ENCODE measurements at regions of chr20 and their contacts with region 1.

Region 1: DNA sequence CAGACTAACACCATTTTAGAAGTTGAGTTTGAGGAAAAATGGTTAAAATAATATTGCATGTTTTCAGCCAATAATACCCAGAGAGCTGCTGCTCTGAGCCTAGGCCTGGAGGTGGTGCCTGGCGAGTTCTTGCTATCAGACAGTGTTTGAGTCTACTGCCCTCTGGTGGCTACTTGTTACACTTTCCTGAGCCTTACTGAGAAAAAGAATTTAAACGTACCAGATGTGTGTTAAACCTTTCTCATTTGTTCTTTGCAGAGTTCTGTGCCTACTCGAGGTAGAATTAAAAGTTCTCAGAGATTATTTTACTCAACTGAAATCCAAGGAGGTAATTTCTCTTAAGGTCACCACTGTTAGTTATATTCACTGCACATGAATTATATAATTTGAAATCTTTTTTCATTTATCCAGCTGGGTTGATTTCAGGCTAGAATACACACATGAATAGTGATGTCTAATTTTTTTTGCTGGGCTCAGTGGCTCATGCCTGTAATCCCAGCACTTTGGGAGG is 38.2 kb downstream of the SHLD1 start:
- DNase-seq: peak; percentile 66
- ATAC-seq: peak; percentile 100
- H3K4me3 ChIP-seq: no peak overlapping the region
- H3K27ac ChIP-seq: no peak overlapping the region
- H3K4me1 ChIP-seq: no peaks in the 10 kb centered on the region
- H3K27me3 ChIP-seq: no peaks in the 10 kb centered on the region
- CTCF ChIP-seq: peak; percentile 76 to 93 (median 87); a peak in 5 of 6 replicates
- EP300 ChIP-seq: no peak
- POLR2A ChIP-seq: no peak
- RAD21 ChIP-seq: peak; percentile 98

Region 2: GRCh38 chr20:5402903-5403531 is 385.4 kb before region 1 on chr20:
- CTCF ChIA-PET with region 1: no interaction called
- POLR2A ChIA-PET with region 1: no interaction called
- RAD21 ChIA-PET with region 1: no interaction called
- SMC1A ChIA-PET with region 1: no interaction called
- in situ Hi-C with region 1: no loop called
- intact Hi-C with region 1: no loop called
- DNase-seq: no peak
- ATAC-seq: peak; percentile 96
- H3K4me3 ChIP-seq: no peak overlapping the region
- H3K27ac ChIP-seq: no peak overlapping the region
- H3K4me1 ChIP-seq: no peaks in the 10 kb centered on the region
- H3K27me3 ChIP-seq: no peaks in the 10 kb centered on the region
- CTCF ChIP-seq: peak; percentile 65 to 85 (median 66)
- EP300 ChIP-seq: no peak
- POLR2A ChIP-seq: no peak
- RAD21 ChIP-seq: peak; percentile 52

Region 3: GRCh38 chr20:5535125-5535771 is 253.2 kb before region 1 on chr20:
- CTCF ChIA-PET with region 1: interaction called, 180 read pairs
- POLR2A ChIA-PET with region 1: interaction called, 5 read pairs
- RAD21 ChIA-PET with region 1: interaction called, 97 read pairs
- SMC1A ChIA-PET with region 1: interaction called, 57 read pairs
- in situ Hi-C with region 1: no loop called
- intact Hi-C with region 1: no loop called
- DNase-seq: no peak
- ATAC-seq: no peak
- H3K4me3 ChIP-seq: no peak overlapping the region
- H3K27ac ChIP-seq: no peak overlapping the region
- H3K4me1 ChIP-seq: no peaks in the 10 kb centered on the region
- H3K27me3 ChIP-seq: no peaks in the 10 kb centered on the region
- CTCF ChIP-seq: no peak
- EP300 ChIP-seq: no peak
- POLR2A ChIP-seq: no peak
- RAD21 ChIP-seq: no peak

Region 4: DNA sequence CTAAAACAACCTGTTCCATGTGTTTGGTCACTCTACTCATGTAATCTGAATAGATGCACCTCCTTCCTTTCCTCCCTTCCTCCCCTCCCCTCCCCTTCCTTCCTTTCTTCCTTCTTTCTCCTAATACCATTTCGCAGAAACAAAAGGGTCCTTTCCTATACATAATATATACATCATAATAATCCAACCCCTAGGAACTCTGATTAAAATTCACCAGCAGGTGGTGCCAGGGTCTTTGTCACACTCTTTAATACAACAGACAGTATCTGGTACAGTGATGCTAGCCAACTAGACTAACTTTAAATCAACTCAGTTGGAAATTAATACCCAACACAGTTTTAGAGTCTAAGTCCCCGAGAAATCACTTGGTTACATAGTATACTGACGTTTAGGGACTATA is 219.4 kb before region 1 on chr20:
- CTCF ChIA-PET with region 1: interaction called, 79 read pairs
- POLR2A ChIA-PET with region 1: interaction called, 10 read pairs
- RAD21 ChIA-PET with region 1: interaction called, 74 read pairs
- SMC1A ChIA-PET with region 1: interaction called, 85 read pairs
- in situ Hi-C with region 1: loop called (anchors 5 kb)
- intact Hi-C with region 1: loop called (anchors 1 kb)
- DNase-seq: no peak
- ATAC-seq: peak; percentile 85
- H3K4me3 ChIP-seq: no peak overlapping the region
- H3K27ac ChIP-seq: no peak overlapping the region
- H3K4me1 ChIP-seq: no peaks in the 10 kb centered on the region
- H3K27me3 ChIP-seq: no peaks in the 10 kb centered on the region
- CTCF ChIP-seq: peak; percentile 34 to 62 (median 38); a peak in 5 of 6 replicates
- EP300 ChIP-seq: no peak
- POLR2A ChIP-seq: no peak
- RAD21 ChIP-seq: peak; percentile 78

Region 5: DNA sequence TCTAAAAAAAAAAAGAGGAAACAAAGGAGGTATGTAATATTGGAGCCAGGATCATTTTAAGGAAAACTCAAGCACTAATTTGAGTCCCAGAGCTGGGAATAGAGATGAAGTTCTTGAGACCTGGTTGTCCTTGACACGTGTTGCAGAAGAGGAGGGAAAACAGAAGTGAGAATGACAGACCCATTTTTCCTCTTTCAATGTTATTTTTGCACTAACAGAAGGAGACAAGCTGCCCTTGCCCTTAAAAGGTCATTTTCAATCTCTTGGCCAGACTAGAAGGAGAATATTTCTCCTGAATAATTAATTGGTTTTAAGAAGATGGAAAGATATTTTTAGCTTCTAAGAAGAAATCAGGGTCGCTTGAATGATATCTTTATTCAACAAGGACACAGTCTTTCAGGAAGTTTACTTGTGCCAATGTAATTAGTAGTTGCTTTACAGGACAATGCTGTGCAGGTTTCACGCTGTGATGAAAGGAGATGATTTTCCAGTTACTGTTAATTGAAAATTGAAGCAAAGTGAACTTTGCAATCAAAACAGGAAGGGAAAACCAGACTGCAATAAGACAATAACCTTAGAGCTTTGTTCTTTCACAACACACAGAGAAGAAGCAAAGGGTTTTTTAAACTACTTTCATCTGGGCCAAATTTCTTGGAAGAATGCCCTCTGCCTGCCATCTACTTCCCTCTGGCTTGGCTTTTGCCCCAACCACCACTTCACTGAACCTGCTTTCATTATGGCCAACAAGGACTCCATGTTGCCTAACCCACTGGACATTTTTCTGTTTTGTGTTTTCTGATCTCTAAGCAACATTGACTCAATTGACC is 146.1 kb before region 1 on chr20:
- CTCF ChIA-PET with region 1: interaction called, 30 read pairs
- POLR2A ChIA-PET with region 1: interaction called, 7 read pairs
- RAD21 ChIA-PET with region 1: interaction called, 34 read pairs
- SMC1A ChIA-PET with region 1: interaction called, 19 read pairs
- in situ Hi-C with region 1: no loop called
- intact Hi-C with region 1: no loop called
- DNase-seq: no peak
- ATAC-seq: no peak
- H3K4me3 ChIP-seq: no peak overlapping the region
- H3K27ac ChIP-seq: peak overlapping the region; percentile 75
- H3K4me1 ChIP-seq: peaks cover 48% of the 10 kb centered on the region
- H3K27me3 ChIP-seq: no peaks in the 10 kb centered on the region
- CTCF ChIP-seq: no peak
- EP300 ChIP-seq: no peak
- POLR2A ChIP-seq: no peak
- RAD21 ChIP-seq: no peak

Region 6: DNA sequence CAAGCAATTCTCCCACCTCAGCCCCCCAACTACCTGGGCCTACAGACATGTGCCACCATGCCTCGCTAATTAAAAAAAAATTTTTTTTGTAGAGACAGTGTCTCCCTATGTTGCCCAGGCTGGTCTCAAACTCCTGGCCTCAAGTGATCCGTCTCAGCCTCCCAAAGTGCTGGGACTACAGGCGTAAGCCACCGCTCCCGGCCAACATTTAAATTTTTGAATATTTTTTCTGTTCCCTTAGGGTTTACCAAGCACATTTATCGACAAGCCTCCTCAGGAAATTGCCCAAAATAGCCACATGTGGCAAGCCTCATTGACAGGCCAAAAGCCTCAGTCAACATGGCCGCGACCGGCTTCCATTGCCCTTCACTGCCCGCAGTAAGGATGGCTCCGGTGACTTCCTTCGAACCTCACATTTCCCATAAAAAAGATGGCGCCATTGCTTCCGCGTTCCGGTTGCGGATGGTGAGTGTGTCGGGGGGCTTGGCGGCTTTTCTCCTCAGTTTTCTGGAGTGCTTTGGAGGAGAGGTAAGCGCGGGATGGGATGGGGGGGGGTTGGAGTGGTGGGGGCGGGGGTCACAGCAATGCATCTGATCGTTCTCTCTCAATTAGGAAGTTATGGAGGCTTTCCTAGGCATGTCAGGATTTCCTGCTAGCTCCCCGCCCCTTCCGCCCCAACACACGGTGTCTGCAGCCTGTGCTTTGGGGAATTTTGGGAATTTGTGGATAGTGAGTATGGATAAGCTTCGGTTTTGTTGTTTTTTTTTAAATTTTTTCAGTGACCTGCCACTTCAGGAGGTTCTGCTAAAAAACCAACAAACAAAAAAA is 38.3 kb before region 1 on chr20 and contains the start of gene SHLD1:
- CTCF ChIA-PET with region 1: interaction called, 15 read pairs
- POLR2A ChIA-PET with region 1: no interaction called
- RAD21 ChIA-PET with region 1: interaction called, 5 read pairs
- SMC1A ChIA-PET with region 1: interaction called, 15 read pairs
- in situ Hi-C with region 1: no loop called
- intact Hi-C with region 1: no loop called
- DNase-seq: peak; percentile 61
- ATAC-seq: peak; percentile 98
- H3K4me3 ChIP-seq: peak within 1 kb of the TSS; percentile 91
- H3K27ac ChIP-seq: peak within 1 kb of the TSS; percentile 59
- H3K4me1 ChIP-seq: peaks cover 3% of the 10 kb centered on the region; the same call in 1 of the 2 replicates
- H3K27me3 ChIP-seq: no peaks in the 10 kb centered on the region
- CTCF ChIP-seq: no peak
- EP300 ChIP-seq: no peak
- POLR2A ChIP-seq: peak; percentile 83
- RAD21 ChIP-seq: no peak
- polyA plus RNA-seq, gene SHLD1: 47.1 to 70.9 TPM

Region 7: GRCh38 chr20:6074145-6074561 is 285.7 kb after region 1 on chr20:
- CTCF ChIA-PET with region 1: no interaction called
- POLR2A ChIA-PET with region 1: no interaction called
- RAD21 ChIA-PET with region 1: interaction called, 4 read pairs
- SMC1A ChIA-PET with region 1: no interaction called
- in situ Hi-C with region 1: no loop called
- intact Hi-C with region 1: loop called (anchors 10 kb)
- DNase-seq: no peak
- ATAC-seq: peak; percentile 88
- H3K4me3 ChIP-seq: no peak overlapping the region
- H3K27ac ChIP-seq: no peak overlapping the region
- H3K4me1 ChIP-seq: no peaks in the 10 kb centered on the region
- H3K27me3 ChIP-seq: no peaks in the 10 kb centered on the region
- CTCF ChIP-seq: peak; percentile 23 to 50 (median 28); a peak in 4 of 6 replicates
- EP300 ChIP-seq: no peak
- POLR2A ChIP-seq: no peak
- RAD21 ChIP-seq: no peak

Region 8: DNA sequence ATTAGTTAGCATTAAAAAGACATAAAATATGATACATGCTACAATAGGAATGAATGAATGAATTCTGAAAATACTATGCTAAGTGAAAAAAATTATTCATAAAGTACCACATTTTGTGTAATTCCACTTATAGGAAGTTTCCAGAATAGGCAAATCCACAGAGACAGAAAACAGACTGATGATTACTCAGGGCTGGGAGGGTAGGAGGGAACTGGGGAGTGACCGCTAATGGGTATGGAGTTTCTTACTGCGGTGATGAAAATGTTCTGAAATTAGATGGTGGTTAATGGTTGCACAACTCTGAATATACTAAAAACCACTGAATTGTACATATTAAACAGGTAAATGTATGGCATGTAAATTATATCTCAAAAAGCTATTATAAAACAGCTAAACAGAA is 311.8 kb after region 1 on chr20:
- CTCF ChIA-PET with region 1: no interaction called
- POLR2A ChIA-PET with region 1: no interaction called
- RAD21 ChIA-PET with region 1: no interaction called
- SMC1A ChIA-PET with region 1: no interaction called
- in situ Hi-C with region 1: no loop called
- intact Hi-C with region 1: no loop called
- DNase-seq: no peak
- ATAC-seq: no peak
- H3K4me3 ChIP-seq: no peak overlapping the region
- H3K27ac ChIP-seq: no peak overlapping the region
- H3K4me1 ChIP-seq: no peaks in the 10 kb centered on the region
- H3K27me3 ChIP-seq: no peaks in the 10 kb centered on the region
- CTCF ChIP-seq: no peak
- EP300 ChIP-seq: no peak
- POLR2A ChIP-seq: no peak
- RAD21 ChIP-seq: no peak

Measured in GM12878 (cell line).